ENCODE measurements at regions of chr22 and their contacts with region 1.

Region 1: DNA sequence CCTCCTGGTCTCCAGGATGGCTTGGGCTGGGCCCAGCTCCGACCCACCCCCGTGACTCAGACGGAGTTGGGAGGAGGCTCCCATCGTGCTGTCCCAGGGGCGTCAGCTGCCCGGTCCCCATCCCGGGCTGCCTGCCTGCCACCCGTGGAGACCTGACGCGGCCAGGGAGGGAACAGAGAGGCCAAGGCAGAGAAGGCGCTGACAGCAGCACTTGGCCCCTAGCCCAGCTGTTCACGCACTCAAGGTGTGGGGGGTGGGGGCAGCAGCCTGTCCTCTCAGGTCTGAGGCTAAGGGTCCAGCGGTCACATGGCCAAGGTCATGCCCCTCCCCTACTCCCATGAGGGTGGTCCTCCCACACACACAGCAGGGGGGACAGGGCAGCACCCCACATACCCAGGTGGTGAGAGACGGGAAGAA is 48.6 kb downstream of the ELFN2 start:
- DNase-seq: no peak
- ATAC-seq: no peak
- H3K4me3 ChIP-seq: no peak overlapping the region
- H3K27ac ChIP-seq: no peak overlapping the region
- H3K4me1 ChIP-seq: no peaks in the 10 kb centered on the region
- H3K27me3 ChIP-seq: peaks cover 8 to 47% of the 10 kb centered on the region in 2 experiments; a peak in 4 of 5 replicates
- CTCF ChIP-seq: no peak
- EP300 ChIP-seq: no peak
- POLR2A ChIP-seq: no peak
- RAD21 ChIP-seq: no peak

Region 2: DNA sequence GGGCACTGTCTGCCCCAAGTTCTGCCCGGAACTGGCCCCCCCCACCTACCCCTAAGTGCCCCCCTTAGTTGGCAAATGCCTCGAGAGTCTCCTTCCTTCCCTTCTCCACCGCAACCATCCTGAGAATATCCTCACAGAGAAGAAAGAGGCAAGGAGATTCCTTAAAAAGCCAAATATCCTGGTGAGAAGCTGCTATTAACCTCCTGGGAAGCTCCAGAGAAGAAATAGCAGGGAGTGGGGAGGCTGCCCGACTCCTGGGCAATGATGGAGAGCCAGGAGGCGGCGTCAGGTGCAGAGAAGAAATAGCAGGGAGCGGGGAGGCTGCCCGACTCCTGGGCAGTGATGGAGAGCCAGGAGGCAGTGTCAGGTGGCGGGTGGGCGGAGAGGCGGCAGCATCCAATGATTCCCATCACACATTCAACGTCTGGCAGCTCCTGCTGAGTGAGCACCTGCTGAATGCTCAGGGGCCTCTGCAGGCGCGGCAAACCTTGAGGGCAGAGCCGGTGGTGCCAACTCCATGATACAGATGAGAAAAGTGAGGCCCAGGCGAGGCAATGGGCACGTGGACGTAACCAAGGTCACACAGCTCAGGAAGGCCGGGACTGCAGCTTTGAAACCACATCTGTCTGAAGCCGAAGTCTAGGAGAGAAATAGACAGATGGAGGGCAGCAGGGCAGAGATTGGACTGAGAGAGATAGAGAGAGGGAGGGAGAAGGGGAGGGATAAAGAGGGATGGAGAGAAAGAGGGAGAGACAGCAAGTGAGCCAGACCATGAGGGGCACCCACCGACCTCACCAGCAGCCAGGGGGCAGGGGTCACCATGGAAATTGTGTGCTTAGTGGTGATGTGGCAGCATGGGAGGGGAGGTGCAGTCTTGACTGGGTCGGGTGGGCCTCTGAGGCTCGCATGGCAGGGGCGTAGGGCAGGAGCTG is 38.1 kb before region 1 on chr22:
- CTCF ChIA-PET with region 1: no interaction called
- POLR2A ChIA-PET with region 1: no interaction called
- in situ Hi-C with region 1: loop called (anchors 5 kb)
- intact Hi-C with region 1: no loop called
- DNase-seq: no peak
- ATAC-seq: no peak
- H3K4me3 ChIP-seq: no peak overlapping the region
- H3K27ac ChIP-seq: no peak overlapping the region
- H3K4me1 ChIP-seq: no peaks in the 10 kb centered on the region
- H3K27me3 ChIP-seq: peaks cover 0 to 23% of the 10 kb centered on the region in 2 experiments; a peak in 3 of 5 replicates
- CTCF ChIP-seq: no peak
- EP300 ChIP-seq: no peak
- POLR2A ChIP-seq: no peak
- RAD21 ChIP-seq: no peak

Region 3: DNA sequence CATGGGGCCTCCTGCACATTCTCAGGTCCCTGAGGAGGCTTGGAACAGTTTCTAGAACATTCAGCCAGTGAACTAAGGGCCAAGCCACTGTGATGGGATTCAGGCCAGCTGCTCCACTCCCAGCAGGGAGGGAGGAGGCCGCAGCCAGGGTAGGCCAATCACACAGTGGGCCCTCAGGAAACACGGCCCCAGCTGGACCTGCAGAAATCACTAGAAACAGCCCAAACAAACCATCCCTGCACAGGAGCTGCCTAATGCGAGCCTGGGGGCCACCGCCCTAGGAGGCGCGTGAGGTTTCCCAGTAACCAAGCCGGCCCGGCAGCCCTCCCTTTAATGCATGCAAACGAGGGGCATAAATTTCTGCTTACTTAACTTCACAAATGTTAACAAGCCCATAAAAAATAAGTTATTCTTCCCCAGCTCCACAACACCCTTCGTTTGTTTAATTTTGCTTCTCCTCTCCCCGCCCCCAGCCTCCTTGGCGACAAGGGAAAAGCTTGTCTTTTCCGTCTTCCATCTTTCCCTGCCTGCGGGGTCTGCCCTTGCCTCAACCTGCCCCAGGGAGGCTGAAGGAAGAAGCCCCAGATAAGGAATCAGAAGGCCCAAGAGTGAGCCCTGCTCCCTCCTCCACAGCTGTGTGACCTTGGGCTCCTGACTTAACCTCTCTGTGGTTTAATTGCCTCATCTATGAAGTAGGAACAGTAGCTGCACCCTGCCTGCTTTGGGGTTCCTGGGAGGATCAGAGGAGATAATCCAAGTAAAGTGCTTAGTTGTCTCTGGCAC is 22.9 kb after region 1 on chr22:
- CTCF ChIA-PET with region 1: no interaction called
- POLR2A ChIA-PET with region 1: no interaction called
- in situ Hi-C with region 1: no loop called
- intact Hi-C with region 1: no loop called
- DNase-seq: no peak
- ATAC-seq: no peak
- H3K4me3 ChIP-seq: no peak overlapping the region
- H3K27ac ChIP-seq: no peak overlapping the region
- H3K4me1 ChIP-seq: no peaks in the 10 kb centered on the region
- H3K27me3 ChIP-seq: peaks cover 2 to 14% of the 10 kb centered on the region in 2 experiments; a peak in 3 of 5 replicates
- CTCF ChIP-seq: no peak
- EP300 ChIP-seq: no peak
- POLR2A ChIP-seq: no peak
- RAD21 ChIP-seq: no peak

Measured in HepG2 (cell line).